ENCODE measurements at regions of chr4 and their contacts with region 1.

Region 1: DNA sequence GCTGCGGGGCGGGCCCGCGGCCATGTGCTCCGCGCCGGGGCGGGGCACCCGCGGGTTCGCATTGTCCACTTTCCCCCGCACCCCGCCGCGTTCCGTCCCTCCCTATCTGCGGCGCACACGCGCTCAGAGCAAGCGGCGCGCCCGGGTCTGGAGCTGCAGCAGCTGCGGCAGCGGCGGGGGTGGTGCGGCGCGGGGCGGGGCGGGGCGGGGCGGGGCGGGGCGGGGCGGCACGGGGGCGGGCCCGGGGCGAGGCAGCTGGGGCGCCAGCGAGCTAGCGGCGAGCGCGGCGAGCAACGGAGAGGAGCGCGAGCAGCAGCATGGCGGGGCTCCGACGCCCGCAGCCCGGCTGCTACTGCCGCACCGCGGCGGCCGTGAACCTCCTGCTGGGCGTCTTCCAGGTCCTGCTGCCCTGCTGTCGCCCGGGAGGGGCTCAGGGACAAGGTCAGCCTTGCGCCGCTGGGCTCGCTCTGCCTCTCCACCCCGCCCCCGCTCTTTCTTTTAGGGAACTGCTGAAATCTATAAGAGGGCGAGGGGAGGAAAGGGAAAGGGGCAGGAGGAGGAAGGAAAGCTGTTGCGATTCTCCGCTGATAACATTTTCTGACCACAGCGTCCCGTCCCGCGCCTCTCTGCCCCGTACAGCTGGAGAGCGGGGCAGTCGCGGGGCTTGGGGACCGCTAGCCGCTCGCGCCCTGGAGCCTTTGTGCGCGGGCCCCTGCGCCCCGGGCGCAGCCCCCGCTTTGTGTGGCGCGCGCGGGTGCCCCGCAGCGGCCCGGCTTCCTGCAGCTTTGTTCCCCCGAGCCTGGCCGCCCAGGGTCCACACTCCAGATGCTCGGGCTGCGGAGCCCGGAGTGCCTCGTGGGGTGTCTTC is at the start of gene TMEM131L:
- DNase-seq: peak; percentile 81
- ATAC-seq: peak; percentile 73
- H3K4me3 Mint-ChIP-seq: peak within 1 kb of the TSS; percentile 96
- H3K27ac Mint-ChIP-seq: peak within 1 kb of the TSS; percentile 96
- H3K4me1 Mint-ChIP-seq: peaks cover 38% of the 10 kb centered on the region
- H3K27me3 Mint-ChIP-seq: no peaks in the 10 kb centered on the region
- total RNA-seq, gene TMEM131L: 51.8 to 57.2 TPM

Region 2: GRCh38 chr4:153344131-153345010 is 121.9 kb before region 1 on chr4 and contains the start of gene MND1:
- POLR2A ChIA-PET with region 1: interaction called, 32 read pairs
- DNase-seq: peak; percentile 97
- ATAC-seq: peak; percentile 93
- H3K4me3 Mint-ChIP-seq: peak within 1 kb of the TSS; percentile 96
- H3K27ac Mint-ChIP-seq: peak within 1 kb of the TSS; percentile 93
- H3K4me1 Mint-ChIP-seq: peaks cover 34% of the 10 kb centered on the region
- H3K27me3 Mint-ChIP-seq: peaks cover 20% of the 10 kb centered on the region
- total RNA-seq, gene MND1: 29.1 to 31.8 TPM

Region 3: DNA sequence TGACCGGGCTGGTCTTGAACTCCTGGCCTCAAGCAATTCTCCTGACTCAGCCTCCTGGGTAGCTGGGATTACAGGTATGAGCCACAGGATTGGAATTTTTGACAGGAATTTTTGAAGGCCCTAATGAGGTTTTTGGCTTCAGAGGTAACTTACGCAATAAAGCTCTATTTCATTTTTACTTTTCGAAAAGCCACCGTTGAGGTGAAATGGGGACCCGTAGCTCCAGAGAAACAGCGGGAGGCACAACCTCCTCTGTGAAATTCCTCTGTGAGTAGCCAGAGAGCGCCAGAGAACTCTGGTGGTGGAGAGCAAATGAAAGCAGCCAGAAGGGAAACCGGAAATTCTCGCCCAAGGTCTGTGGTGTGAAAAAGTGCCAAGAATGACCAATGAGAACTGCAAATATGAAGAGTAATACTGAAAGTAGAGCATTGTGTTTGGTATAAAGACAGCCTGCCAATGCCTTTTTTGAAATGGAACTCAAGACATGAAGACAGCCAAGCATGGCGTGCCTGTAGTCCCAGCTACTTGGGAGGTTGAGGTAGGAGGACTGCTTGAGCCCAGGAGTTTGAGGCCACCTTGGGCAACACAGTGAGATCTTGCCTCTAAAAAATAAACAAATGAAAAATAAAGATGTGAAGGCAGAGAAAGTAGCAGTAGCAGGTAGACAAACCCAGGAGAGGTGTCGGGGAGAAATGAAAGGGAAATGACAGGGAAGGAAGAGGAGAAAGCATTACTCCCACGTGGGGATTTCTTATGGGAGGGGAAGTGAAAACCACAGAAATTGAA is 33.2 kb before region 1 on chr4:
- POLR2A ChIA-PET with region 1: interaction called, 58 read pairs
- DNase-seq: peak; percentile 55
- ATAC-seq: peak; percentile 83
- H3K4me3 Mint-ChIP-seq: peak overlapping the region; percentile 86
- H3K27ac Mint-ChIP-seq: peak overlapping the region; percentile 97
- H3K4me1 Mint-ChIP-seq: peaks cover 53% of the 10 kb centered on the region
- H3K27me3 Mint-ChIP-seq: no peaks in the 10 kb centered on the region

Region 4: DNA sequence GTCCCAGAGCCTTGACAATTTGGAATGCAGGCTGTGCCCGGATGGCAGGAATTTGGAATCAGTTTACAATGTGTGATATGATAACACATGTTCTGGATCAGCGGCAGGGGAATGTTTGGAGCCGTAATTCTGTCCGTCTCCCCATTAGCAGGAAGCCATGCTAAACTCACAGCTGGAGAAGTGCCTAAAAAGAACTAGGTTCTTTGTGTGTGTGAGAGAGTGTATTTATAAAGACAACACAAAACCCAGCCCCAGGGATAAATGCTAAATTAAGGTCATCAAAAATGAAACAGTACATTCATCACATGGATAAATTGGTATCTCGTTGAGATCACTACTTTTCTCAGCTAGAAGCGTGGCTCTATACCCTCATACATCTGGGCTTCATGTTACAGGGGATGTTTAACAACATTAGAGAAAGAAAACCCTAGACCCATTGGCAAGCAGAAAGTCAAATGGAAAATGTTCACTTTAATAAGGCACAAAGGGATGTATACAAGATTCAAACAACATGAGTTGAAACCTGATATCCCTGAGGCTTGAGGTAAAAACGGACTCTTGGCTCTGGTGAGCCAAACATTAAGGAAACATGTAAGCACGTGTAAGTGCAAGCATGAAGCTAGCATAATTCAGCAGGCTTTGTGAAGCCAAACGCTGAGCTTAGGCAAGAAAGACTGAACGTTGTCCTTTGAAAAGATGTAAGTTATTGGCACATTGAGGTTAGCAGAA is 18.1 kb before region 1 on chr4:
- POLR2A ChIA-PET with region 1: interaction called, 32 read pairs
- DNase-seq: no peak
- ATAC-seq: no peak
- H3K4me3 Mint-ChIP-seq: no peak overlapping the region
- H3K27ac Mint-ChIP-seq: no peak overlapping the region
- H3K4me1 Mint-ChIP-seq: peaks cover 26% of the 10 kb centered on the region
- H3K27me3 Mint-ChIP-seq: no peaks in the 10 kb centered on the region

Region 5: DNA sequence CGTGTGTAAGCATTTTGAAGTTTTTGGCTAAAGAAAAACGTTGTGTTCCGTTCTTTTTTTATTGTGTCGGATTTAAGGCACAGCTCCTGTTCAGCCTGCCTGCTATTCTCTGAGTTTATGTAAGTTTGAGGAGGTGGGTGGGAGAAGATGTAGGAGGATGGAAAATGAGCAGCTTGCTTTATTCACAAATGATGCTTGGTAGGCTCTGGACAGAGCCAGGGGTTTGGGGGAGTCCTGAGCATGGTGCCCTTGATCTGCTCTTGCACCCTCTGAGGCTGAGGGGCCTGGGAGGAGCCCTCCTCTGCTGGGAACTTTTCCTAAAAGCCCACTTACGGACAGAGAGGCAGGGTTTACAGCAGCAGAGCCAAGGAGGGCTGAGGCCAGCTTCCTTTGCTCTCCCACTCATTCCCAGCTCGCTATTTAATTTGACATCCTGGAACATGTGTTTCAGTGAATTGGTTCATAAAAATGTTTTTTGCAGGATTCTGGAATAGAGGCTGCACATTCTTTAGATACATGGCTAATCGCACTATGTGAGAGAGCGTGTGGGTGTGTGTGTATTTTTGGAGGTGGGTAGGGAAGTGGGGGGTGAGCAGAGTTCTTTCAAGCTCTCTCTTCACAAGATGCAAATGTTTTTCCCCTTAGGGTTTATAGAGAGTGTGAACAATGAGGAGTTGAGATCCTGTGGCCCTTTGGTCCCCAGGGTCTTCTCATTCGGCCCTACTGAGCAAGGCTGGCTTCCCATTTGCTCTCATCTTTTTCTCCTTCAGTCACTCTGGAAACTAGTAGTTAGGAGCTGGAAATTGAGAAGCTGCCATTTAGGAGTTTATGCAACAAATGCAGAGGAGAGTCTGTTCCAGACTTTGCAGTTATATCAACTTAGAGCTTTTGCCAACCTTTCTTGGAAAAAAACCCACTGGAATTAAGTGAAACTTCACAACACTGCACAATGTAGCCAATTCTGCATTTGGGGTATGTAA is 32.0 kb after region 1 on chr4:
- POLR2A ChIA-PET with region 1: interaction called, 13 read pairs
- DNase-seq: no peak
- ATAC-seq: no peak
- H3K4me3 Mint-ChIP-seq: peak overlapping the region; percentile 70
- H3K27ac Mint-ChIP-seq: peak overlapping the region; percentile 87
- H3K4me1 Mint-ChIP-seq: peaks cover 76% of the 10 kb centered on the region
- H3K27me3 Mint-ChIP-seq: no peaks in the 10 kb centered on the region

Region 6: GRCh38 chr4:153573881-153574802 is 107.8 kb after region 1 on chr4:
- POLR2A ChIA-PET with region 1: interaction called, 30 read pairs
- DNase-seq: peak; percentile 58
- ATAC-seq: peak; percentile 97
- H3K4me3 Mint-ChIP-seq: peak overlapping the region; percentile 47
- H3K27ac Mint-ChIP-seq: peak overlapping the region; percentile 67
- H3K4me1 Mint-ChIP-seq: peaks cover 60% of the 10 kb centered on the region
- H3K27me3 Mint-ChIP-seq: no peaks in the 10 kb centered on the region

Measured in activated naive CD8-positive, alpha-beta T cell treated with anti-CD3 and anti-CD28 coated beads, Interleukin-2, amount 10 ng/mL, durations not matched to agents 7 days and 5 days (primary cell).